CD4-positive, alpha-beta T cell (primary cell): ENCODE measurements at regions of chr15 and their contacts with region 1.

Region 1: GRCh38 chr15:86178845-86179244 is 99.2 kb downstream of the AGBL1 start:
- DNase-seq: peak in 3 of 14 experiments; percentile 1 to 15 (median 4)
- ATAC-seq: no peak
- H3K4me3 ChIP-seq: no peak overlapping the region
- H3K4me3 Mint-ChIP-seq: no peak overlapping the region
- H3K27ac ChIP-seq: no peak overlapping the region
- H3K27ac Mint-ChIP-seq: no peak overlapping the region
- H3K4me1 ChIP-seq: no peaks in the 10 kb centered on the region
- H3K4me1 Mint-ChIP-seq: no peaks in the 10 kb centered on the region
- H3K27me3 ChIP-seq: peaks cover 0 to 22% of the 10 kb centered on the region in 2 experiments
- H3K27me3 Mint-ChIP-seq: peaks cover 38% of the 10 kb centered on the region
- CTCF ChIP-seq: no peak

Region 2: GRCh38 chr15:85865070-85865684 is 313.7 kb before region 1 on chr15:
- CTCF ChIA-PET with region 1: no interaction called
- POLR2A ChIA-PET with region 1: no interaction called
- intact Hi-C with region 1: loop called in 1 of 2 experiments (anchors 10 kb)
- DNase-seq: peak in 4 of 14 experiments; percentile 4 to 50 (median 20)
- ATAC-seq: no peak
- H3K4me3 ChIP-seq: no peak overlapping the region
- H3K4me3 Mint-ChIP-seq: no peak overlapping the region
- H3K27ac ChIP-seq: no peak overlapping the region
- H3K27ac Mint-ChIP-seq: no peak overlapping the region
- H3K4me1 ChIP-seq: no peaks in the 10 kb centered on the region
- H3K4me1 Mint-ChIP-seq: peaks cover 10% of the 10 kb centered on the region
- H3K27me3 ChIP-seq: peaks cover 0 to 2% of the 10 kb centered on the region in 2 experiments
- H3K27me3 Mint-ChIP-seq: peaks cover 4% of the 10 kb centered on the region
- CTCF ChIP-seq: peak; percentile 27

Region 3: GRCh38 chr15:86336051-86336788 is 157.4 kb after region 1 on chr15:
- CTCF ChIA-PET with region 1: no interaction called
- POLR2A ChIA-PET with region 1: no interaction called
- intact Hi-C with region 1: no loop called
- DNase-seq: no peak
- ATAC-seq: no peak
- H3K4me3 ChIP-seq: no peak overlapping the region
- H3K4me3 Mint-ChIP-seq: no peak overlapping the region
- H3K27ac ChIP-seq: no peak overlapping the region
- H3K27ac Mint-ChIP-seq: no peak overlapping the region
- H3K4me1 ChIP-seq: no peaks in the 10 kb centered on the region
- H3K4me1 Mint-ChIP-seq: no peaks in the 10 kb centered on the region
- H3K27me3 ChIP-seq: peaks cover 0 to 3% of the 10 kb centered on the region in 2 experiments
- H3K27me3 Mint-ChIP-seq: no peaks in the 10 kb centered on the region
- CTCF ChIP-seq: no peak